ENCODE measurements at regions of chr19 and their contacts with region 1.

Region 1: GRCh38 chr19:16088351-16089009 is 12.2 kb downstream of the TPM4 start:
- DNase-seq: no peak
- ATAC-seq: no peak
- H3K4me3 ChIP-seq: no peak overlapping the region
- H3K4me3 Mint-ChIP-seq: peak overlapping the region in 3 of 10 donors; percentile 23 to 35 (median 32)
- H3K27ac ChIP-seq: no peak overlapping the region
- H3K27ac Mint-ChIP-seq: peak overlapping the region in 8 of 9 donors; percentile 20 to 96 (median 68)
- H3K4me1 ChIP-seq: peaks cover 25 to 26% of the 10 kb centered on the region in 2 donors
- H3K4me1 Mint-ChIP-seq: peaks cover 25 to 63% (median 51%) of the 10 kb centered on the region in 7 donors
- H3K27me3 ChIP-seq: no peaks in the 10 kb centered on the region
- H3K27me3 Mint-ChIP-seq: no peaks in the 10 kb centered on the region

Region 2: GRCh38 chr19:15629003-15629880 is 459.2 kb before region 1 on chr19:
- CTCF ChIA-PET with region 1: interaction called, 3 read pairs
- POLR2A ChIA-PET with region 1: no interaction called
- intact Hi-C with region 1: loop called in 1 of 2 experiments (anchors 1 kb)
- DNase-seq: peak; percentile 74 to 94 (median 85)
- ATAC-seq: peak; percentile 98
- H3K4me3 ChIP-seq: no peak overlapping the region
- H3K4me3 Mint-ChIP-seq: peak overlapping the region in 2 of 10 donors; percentile 6 to 37
- H3K27ac ChIP-seq: no peak overlapping the region
- H3K27ac Mint-ChIP-seq: peak overlapping the region in 1 of 9 donors; percentile 67
- H3K4me1 ChIP-seq: peaks cover 0 to 6% of the 10 kb centered on the region in 2 donors
- H3K4me1 Mint-ChIP-seq: no peaks in the 10 kb centered on the region
- H3K27me3 ChIP-seq: no peaks in the 10 kb centered on the region
- H3K27me3 Mint-ChIP-seq: peaks cover 5 to 43% (median 32%) of the 10 kb centered on the region in 5 donors

Region 3: DNA sequence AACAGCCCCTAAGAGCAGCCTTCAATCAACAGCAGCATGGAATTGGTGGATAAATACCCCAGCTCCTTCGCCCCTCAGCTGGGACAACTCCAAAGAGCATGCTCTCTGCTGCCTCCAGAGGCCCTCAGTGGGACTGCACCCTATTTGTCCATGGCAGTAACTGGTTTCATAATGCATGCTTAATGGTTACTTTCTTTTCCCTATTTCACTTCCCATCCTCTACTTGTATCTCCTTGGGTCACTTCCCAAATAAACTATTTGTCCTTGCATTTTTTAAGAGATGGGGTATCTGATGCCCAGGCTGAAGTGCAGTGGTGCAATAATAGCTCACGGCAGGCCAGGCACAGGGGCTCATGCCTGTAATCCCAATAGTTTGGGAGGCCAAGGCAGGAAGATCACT is 25.7 kb before region 1 on chr19:
- CTCF ChIA-PET with region 1: interaction called, 28 read pairs
- POLR2A ChIA-PET with region 1: interaction called, 4 read pairs
- intact Hi-C with region 1: loop called in 1 of 2 experiments (anchors 1 kb)
- DNase-seq: peak; percentile 32 to 77 (median 63)
- ATAC-seq: peak; percentile 89
- H3K4me3 ChIP-seq: no peak overlapping the region
- H3K4me3 Mint-ChIP-seq: peak overlapping the region in 1 of 10 donors; percentile 37
- H3K27ac ChIP-seq: no peak overlapping the region
- H3K27ac Mint-ChIP-seq: peak overlapping the region in 2 of 9 donors; percentile 3 to 24
- H3K4me1 ChIP-seq: peaks cover 0 to 4% of the 10 kb centered on the region in 2 donors
- H3K4me1 Mint-ChIP-seq: peaks cover 15 to 27% (median 21%) of the 10 kb centered on the region in 7 donors
- H3K27me3 ChIP-seq: no peaks in the 10 kb centered on the region
- H3K27me3 Mint-ChIP-seq: peaks cover 0 to 10% (median 0%) of the 10 kb centered on the region in 5 donors

Region 4: GRCh38 chr19:16070366-16070990 is 18.0 kb before region 1 on chr19:
- CTCF ChIA-PET with region 1: interaction called, 29 read pairs
- POLR2A ChIA-PET with region 1: interaction called, 128 read pairs
- intact Hi-C with region 1: loop called in 1 of 2 experiments (anchors 1 kb)
- DNase-seq: peak; percentile 53 to 95 (median 90)
- ATAC-seq: peak; percentile 93
- H3K4me3 ChIP-seq: peak overlapping the region; percentile 56
- H3K4me3 Mint-ChIP-seq: peak overlapping the region in 4 of 10 donors; percentile 65 to 81 (median 68)
- H3K27ac ChIP-seq: peak overlapping the region; percentile 89
- H3K27ac Mint-ChIP-seq: no peak overlapping the region
- H3K4me1 ChIP-seq: peaks cover 22 to 61% of the 10 kb centered on the region in 2 donors
- H3K4me1 Mint-ChIP-seq: peaks cover 31 to 50% (median 42%) of the 10 kb centered on the region in 7 donors
- H3K27me3 ChIP-seq: no peaks in the 10 kb centered on the region
- H3K27me3 Mint-ChIP-seq: no peaks in the 10 kb centered on the region

Measured in naive thymus-derived CD4-positive, alpha-beta T cell (primary cell).